ENCODE measurements at regions of chr6 and their contacts with region 1.

Region 1: GRCh38 chr6:26327450-26328264 is 37.3 kb upstream of the BTN3A2 start:
- DNase-seq: no peak
- H3K4me3 ChIP-seq: peak overlapping the region; percentile 38 to 79 (median 79)
- H3K27ac ChIP-seq: peak overlapping the region; percentile 36
- H3K4me1 ChIP-seq: peaks cover 6% of the 10 kb centered on the region
- H3K27me3 ChIP-seq: no peaks in the 10 kb centered on the region
- CTCF ChIP-seq: no peak

Region 2: DNA sequence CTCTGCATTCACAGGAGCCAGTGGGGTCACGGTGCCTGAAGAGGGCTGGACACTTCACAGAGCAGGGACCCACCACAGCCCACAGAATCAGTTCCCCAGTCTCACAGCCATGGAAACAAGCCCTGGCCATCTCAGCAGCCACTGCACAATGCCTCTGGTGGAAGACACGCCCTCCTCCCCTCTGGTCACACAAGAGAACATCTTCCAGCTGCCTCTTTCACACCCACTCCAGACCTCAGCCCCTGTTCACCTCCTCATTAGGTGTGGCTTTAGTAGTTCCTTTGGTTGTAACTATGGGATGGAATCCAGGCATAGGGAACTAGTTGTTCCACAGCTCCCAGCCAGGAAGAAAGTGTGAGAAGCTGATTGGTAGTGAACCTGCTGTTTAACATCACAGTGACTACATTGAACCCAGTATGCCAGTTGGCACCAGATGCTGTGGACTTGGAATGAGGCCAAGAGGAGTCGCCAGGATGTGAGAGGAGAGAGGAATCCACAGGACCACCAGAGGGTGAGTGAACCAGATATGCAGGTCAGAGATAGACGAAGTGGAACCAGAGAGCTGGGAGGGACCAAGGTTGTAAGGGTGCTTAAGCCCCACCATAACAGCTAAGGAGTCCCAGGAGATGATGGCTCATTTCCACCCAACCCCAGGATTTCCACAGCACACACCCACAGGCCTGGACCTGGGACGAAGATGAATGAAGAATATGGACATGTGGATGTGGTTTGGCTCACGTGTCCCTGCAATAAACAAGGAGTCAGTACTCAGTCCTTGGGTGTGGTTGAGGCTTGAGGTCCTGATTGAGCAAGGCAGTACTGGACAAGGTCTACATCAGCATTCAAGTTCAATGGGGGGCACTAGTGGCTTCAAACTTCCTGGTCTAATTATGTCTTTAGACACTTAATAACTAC is 103.9 kb after region 1 on chr6:
- dilution Hi-C with region 1: no loop called
- DNase-seq: no peak
- H3K4me3 ChIP-seq: no peak overlapping the region
- H3K27ac ChIP-seq: no peak overlapping the region
- H3K4me1 ChIP-seq: no peaks in the 10 kb centered on the region
- H3K27me3 ChIP-seq: no peaks in the 10 kb centered on the region
- CTCF ChIP-seq: no peak

Region 3: GRCh38 chr6:26537846-26538571 is 210.4 kb after region 1 on chr6 and contains the start of gene HMGN4:
- dilution Hi-C with region 1: loop called (anchors 25 kb)
- DNase-seq: no peak
- H3K4me3 ChIP-seq: peak within 1 kb of the TSS; percentile 73 to 98 (median 87)
- H3K27ac ChIP-seq: peak within 1 kb of the TSS; percentile 90
- H3K4me1 ChIP-seq: peaks cover 18% of the 10 kb centered on the region
- H3K27me3 ChIP-seq: no peaks in the 10 kb centered on the region
- CTCF ChIP-seq: peak in 1 of 3 experiments; percentile 13
- polyA plus RNA-seq, gene HMGN4: 46.4 to 62.6 TPM (median 54.0 TPM) in 3 replicates